ENCODE measurements at regions of chr7 and their contacts with region 1.

Region 1: DNA sequence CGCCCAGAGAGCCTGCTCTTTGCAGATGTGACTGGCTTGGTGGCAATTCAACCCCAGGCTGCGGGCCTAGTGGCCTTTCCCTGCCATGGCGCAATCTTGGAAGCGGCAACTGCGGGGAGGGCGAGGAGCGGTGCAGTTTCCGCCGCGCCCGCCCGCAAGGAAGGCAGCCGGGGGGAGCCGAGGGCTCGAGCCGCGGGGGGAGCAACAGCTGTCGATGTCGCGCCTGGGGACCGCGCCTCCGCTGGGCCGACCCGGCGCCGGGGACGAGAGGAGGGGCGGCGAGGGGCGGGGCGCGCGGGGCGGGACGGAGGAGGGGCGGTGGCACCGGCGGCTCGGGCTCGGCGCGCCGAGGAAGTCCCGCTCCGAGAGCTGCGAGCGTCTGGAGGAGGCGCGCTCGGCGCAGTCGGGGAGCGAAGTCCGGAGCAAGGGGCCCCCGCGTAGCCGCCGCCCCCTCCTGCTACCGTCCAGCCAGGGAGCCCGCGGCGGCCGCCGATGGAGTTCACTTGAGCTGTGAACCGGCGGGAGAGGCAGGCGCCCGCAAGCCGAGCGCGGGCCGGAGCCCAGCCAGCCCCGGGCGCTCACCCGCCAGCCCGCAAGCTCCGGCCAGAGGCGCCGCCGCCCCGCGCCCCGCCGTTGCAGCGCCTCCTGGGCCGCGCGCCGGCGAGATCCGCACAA is 438.1 kb upstream of the GALNT17 start:
- DNase-seq: peak; percentile 30 to 83 (median 77)
- H3K4me3 ChIP-seq: no peak overlapping the region
- H3K4me3 Mint-ChIP-seq: peak overlapping the region; percentile 79 to 91 (median 85)
- H3K27ac ChIP-seq: no peak overlapping the region
- H3K27ac Mint-ChIP-seq: peak overlapping the region; percentile 67 to 92 (median 90)
- H3K4me1 ChIP-seq: no peaks in the 10 kb centered on the region
- H3K4me1 Mint-ChIP-seq: peaks cover 25 to 52% (median 38%) of the 10 kb centered on the region in 3 donors
- H3K27me3 ChIP-seq: no peaks in the 10 kb centered on the region
- H3K27me3 Mint-ChIP-seq: peaks cover 5 to 20% of the 10 kb centered on the region in 2 donors

Region 2: GRCh38 chr7:70585071-70585470 is 108.8 kb before region 1 on chr7:
- CTCF ChIA-PET with region 1: interaction called, 12 read pairs
- POLR2A ChIA-PET with region 1: interaction called, 5 read pairs
- DNase-seq: no peak
- H3K4me3 ChIP-seq: no peak overlapping the region
- H3K4me3 Mint-ChIP-seq: no peak overlapping the region
- H3K27ac ChIP-seq: no peak overlapping the region
- H3K27ac Mint-ChIP-seq: no peak overlapping the region
- H3K4me1 ChIP-seq: no peaks in the 10 kb centered on the region
- H3K4me1 Mint-ChIP-seq: peaks cover 8 to 14% (median 12%) of the 10 kb centered on the region in 3 donors
- H3K27me3 ChIP-seq: no peaks in the 10 kb centered on the region
- H3K27me3 Mint-ChIP-seq: no peaks in the 10 kb centered on the region

Region 3: DNA sequence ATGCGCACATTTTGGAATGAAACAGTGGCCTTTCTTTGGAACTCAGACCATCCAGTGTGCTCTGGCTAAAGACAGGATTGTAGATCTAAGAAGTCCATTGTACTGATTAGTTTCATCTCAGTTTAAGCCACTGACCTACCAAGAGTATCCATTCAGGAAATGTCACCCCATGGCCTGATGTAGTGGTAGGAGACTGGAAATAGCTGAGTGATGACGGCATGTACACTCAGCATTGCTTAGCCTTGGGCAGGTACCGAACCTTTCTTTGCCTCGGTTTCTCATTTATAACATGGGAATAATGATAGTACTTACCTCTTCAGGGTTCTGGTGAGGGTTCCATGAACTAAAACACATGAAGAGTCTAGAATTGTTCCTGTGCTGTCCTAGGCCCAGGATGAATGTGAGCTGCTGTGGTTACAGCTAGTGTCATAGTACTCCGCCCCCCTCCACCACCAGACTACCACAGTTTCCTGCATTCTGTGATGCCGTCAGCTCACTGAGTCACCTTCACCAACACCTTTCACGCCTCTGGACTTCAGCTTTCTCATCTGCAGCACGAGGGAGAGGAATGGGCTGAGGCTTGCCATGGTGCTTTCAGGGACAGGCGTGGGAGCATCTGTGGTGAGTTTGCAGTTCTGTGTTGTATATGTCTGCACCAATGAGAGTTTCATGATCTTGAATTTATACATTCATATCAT is 45.9 kb before region 1 on chr7:
- CTCF ChIA-PET with region 1: interaction called, 16 read pairs
- POLR2A ChIA-PET with region 1: interaction called, 19 read pairs
- DNase-seq: peak; percentile 71 to 94 (median 81)
- H3K4me3 ChIP-seq: no peak overlapping the region
- H3K4me3 Mint-ChIP-seq: peak overlapping the region; percentile 57 to 86 (median 63)
- H3K27ac ChIP-seq: peak overlapping the region; percentile 18
- H3K27ac Mint-ChIP-seq: peak overlapping the region; percentile 73 to 98 (median 96)
- H3K4me1 ChIP-seq: peaks cover 26% of the 10 kb centered on the region
- H3K4me1 Mint-ChIP-seq: peaks cover 33 to 46% (median 37%) of the 10 kb centered on the region in 3 donors
- H3K27me3 ChIP-seq: no peaks in the 10 kb centered on the region
- H3K27me3 Mint-ChIP-seq: no peaks in the 10 kb centered on the region

Region 4: GRCh38 chr7:70681469-70682350 is 12.1 kb before region 1 on chr7:
- CTCF ChIA-PET with region 1: interaction called, 5 read pairs
- POLR2A ChIA-PET with region 1: interaction called, 10 read pairs
- DNase-seq: no peak
- H3K4me3 ChIP-seq: peak overlapping the region; percentile 22
- H3K4me3 Mint-ChIP-seq: peak overlapping the region; percentile 83 to 93 (median 86)
- H3K27ac ChIP-seq: peak overlapping the region; percentile 21
- H3K27ac Mint-ChIP-seq: peak overlapping the region; percentile 86 to 99 (median 97)
- H3K4me1 ChIP-seq: peaks cover 12% of the 10 kb centered on the region
- H3K4me1 Mint-ChIP-seq: peaks cover 40 to 55% (median 52%) of the 10 kb centered on the region in 3 donors
- H3K27me3 ChIP-seq: no peaks in the 10 kb centered on the region
- H3K27me3 Mint-ChIP-seq: peaks cover 0 to 3% of the 10 kb centered on the region in 2 donors

Region 5: DNA sequence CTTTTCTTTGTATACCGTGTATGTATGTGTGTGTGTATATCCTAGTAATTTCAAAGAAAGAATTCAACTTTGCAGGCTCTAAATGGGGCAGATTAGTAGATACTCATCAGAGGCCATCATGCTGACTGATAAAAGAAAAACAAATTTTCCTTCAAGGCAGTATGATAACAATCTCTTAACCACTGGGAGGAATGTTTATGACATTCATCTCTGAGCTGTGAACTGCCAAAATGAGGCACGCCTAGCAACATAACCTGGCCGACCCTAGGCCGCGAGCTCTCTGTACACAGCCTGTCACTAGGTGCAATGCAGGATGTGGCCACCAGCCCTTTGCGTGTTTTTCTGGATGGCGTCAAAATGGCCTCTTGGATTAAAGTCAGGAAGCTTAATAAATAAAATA is 94.5 kb after region 1 on chr7:
- CTCF ChIA-PET with region 1: no interaction called
- POLR2A ChIA-PET with region 1: no interaction called
- DNase-seq: peak in 2 of 5 donors; percentile 21 to 53
- H3K4me3 ChIP-seq: no peak overlapping the region
- H3K4me3 Mint-ChIP-seq: peak overlapping the region in 5 of 7 donors; percentile 1 to 69 (median 39)
- H3K27ac ChIP-seq: no peak overlapping the region
- H3K27ac Mint-ChIP-seq: peak overlapping the region in 7 of 8 donors; percentile 2 to 96 (median 90)
- H3K4me1 ChIP-seq: no peaks in the 10 kb centered on the region
- H3K4me1 Mint-ChIP-seq: peaks cover 4 to 35% (median 22%) of the 10 kb centered on the region in 3 donors
- H3K27me3 ChIP-seq: no peaks in the 10 kb centered on the region
- H3K27me3 Mint-ChIP-seq: no peaks in the 10 kb centered on the region